ENCODE measurements at regions of chr14 and their contacts with region 1.

Region 1: DNA sequence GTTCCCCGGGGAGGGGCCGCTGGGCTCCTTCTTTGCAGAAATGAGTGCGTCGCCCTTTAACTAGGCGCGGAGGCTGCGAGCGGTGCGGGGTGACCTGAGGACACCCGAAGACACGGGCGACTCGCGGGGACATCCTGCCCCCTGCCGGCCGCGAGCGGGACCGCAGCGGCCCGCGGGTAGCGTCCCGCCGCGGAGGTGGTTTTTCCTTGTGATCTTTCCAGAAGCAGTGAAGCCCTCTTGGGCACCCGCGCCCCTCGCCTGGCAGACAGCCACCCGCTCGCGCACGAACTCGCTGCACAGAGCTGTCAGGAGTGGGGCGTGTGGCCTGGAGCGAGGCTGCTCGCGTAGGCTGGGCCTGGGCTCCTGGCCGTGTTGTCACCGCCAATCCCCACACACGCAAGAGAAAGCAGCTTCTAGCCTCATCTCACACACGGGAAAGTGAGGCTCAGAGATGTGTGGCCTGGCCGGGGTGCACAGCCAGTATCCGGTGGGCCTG is 67.2 kb downstream of the DIO3 start:
- DNase-seq: peak; percentile 87
- CTCF ChIP-seq: peak; percentile 94

Region 2: GRCh38 chr14:100850841-100851585 is 777.5 kb before region 1 on chr14:
- in situ Hi-C with region 1: loop called (anchors 25 kb)
- DNase-seq: peak; percentile 70
- CTCF ChIP-seq: peak; percentile 76

Region 3: GRCh38 chr14:101335061-101335661 is 293.4 kb before region 1 on chr14:
- in situ Hi-C with region 1: no loop called
- DNase-seq: no peak
- CTCF ChIP-seq: no peak

Region 4: DNA sequence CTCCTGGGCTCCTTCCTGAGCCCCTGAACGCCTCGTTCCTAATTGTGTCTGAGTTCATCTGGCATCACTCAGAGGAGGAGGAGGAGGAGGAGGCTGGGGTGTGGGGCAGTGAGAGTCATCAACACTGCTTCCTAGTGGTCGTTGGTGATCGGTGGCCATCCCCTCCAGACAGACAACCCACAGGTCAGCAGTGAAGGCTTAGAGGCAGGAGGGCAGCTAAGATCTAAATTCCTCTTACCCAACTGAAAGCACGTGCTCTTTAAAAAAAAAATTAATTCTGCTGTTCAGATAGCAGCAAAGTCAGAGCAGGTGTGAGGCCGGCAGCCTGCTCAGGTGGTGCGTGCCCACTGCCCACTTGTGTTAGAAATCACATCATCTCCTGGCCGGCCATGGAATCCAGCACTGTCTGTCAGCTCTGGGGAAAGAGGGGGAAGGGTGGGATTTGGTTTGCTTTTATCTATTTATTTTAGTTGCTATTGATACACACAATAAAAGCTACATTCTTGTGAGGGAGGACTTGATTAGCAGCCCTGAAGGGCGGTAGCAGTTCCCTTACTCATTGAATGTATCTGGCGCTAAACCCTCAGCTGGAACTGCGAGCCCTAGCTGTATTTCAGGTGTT is 179.6 kb after region 1 on chr14:
- in situ Hi-C with region 1: no loop called
- DNase-seq: no peak
- CTCF ChIP-seq: no peak

Measured in GM13977 (cell line).